ENCODE measurements at regions of chr12 and their contacts with region 1.

Region 1: DNA sequence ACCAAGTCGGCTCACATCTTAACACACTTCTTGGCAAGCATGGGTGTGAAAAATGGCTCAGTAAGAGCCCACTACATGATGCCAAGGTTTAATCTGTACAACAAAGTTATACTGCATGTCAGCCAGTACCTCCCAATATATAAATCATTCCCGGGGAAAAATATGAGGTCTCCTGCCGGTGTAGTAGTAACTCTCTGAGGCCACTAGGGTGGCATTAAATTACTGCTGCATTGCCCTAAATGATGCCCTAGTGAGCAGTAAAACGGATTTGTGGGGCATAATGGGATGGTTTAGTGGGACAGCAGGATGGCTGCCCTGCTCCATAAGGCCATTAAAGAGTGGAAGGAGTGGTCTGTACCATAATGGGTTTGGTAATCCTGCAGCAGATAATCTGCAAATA is 267.7 kb downstream of the MED13L start:
- DNase-seq: no peak
- H3K4me3 ChIP-seq: no peak overlapping the region
- H3K27ac ChIP-seq: no peak overlapping the region
- H3K4me1 ChIP-seq: no peaks in the 10 kb centered on the region
- H3K27me3 ChIP-seq: no peaks in the 10 kb centered on the region
- CTCF ChIP-seq: peak in 3 of 6 experiments; percentile 7 to 41 (median 22)
- POLR2A ChIP-seq: no peak

Region 2: DNA sequence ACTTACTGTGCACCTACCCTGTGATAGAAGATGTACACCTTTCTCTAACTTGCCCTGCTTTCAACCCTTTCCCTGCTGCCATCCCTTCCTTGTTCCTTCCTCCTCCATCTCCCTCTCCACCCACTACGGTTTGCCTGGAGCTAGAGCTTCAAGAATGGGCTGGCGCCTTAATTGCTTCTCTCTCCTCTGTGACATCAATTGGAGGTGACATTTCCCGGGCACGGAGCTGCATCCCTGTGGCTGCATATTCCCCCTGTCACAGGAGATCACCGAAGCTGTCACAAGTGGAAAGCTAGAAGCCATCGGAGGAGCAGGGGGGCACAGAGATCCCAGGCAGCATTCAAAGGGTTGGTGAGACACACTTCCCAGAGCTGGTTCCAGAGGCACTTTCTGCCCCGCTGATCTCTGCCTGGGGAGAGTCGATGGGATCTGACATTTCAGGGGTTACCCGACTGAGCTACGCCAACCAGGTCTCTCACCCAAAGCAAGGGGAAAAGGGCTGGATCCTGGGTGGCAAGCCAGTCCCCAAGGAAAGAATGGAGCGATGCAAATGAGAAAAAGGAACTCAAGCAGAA is 337.2 kb before region 1 on chr12:
- intact Hi-C with region 1: no loop called
- DNase-seq: no peak
- H3K4me3 ChIP-seq: no peak overlapping the region
- H3K27ac ChIP-seq: no peak overlapping the region
- H3K4me1 ChIP-seq: no peaks in the 10 kb centered on the region
- H3K27me3 ChIP-seq: no peaks in the 10 kb centered on the region
- CTCF ChIP-seq: no peak
- POLR2A ChIP-seq: no peak

Region 3: DNA sequence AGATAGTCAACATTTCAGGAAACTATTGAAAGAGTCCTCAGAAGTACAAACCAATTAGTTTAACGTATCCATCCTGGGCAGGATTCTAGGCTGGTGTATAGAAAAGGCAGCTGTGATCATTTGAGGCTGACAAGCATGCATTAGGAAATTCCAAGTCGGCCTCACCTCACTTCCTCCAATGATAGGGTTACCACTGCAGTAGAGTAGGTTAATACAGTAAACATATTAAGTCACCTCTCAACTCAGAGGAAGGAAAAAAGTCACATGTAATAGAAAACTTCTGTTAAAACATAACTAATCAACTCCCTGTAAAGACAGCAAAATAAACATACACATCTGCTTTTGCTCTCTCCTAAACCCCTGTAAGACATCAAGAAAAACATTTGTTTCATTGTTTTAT is 234.2 kb after region 1 on chr12:
- intact Hi-C with region 1: loop called (anchors 10 kb)
- DNase-seq: no peak
- H3K4me3 ChIP-seq: no peak overlapping the region
- H3K27ac ChIP-seq: no peak overlapping the region
- H3K4me1 ChIP-seq: peaks cover 12 to 90% (median 26%) of the 10 kb centered on the region in 3 donors
- H3K27me3 ChIP-seq: no peaks in the 10 kb centered on the region
- CTCF ChIP-seq: no peak
- POLR2A ChIP-seq: no peak

Region 4: DNA sequence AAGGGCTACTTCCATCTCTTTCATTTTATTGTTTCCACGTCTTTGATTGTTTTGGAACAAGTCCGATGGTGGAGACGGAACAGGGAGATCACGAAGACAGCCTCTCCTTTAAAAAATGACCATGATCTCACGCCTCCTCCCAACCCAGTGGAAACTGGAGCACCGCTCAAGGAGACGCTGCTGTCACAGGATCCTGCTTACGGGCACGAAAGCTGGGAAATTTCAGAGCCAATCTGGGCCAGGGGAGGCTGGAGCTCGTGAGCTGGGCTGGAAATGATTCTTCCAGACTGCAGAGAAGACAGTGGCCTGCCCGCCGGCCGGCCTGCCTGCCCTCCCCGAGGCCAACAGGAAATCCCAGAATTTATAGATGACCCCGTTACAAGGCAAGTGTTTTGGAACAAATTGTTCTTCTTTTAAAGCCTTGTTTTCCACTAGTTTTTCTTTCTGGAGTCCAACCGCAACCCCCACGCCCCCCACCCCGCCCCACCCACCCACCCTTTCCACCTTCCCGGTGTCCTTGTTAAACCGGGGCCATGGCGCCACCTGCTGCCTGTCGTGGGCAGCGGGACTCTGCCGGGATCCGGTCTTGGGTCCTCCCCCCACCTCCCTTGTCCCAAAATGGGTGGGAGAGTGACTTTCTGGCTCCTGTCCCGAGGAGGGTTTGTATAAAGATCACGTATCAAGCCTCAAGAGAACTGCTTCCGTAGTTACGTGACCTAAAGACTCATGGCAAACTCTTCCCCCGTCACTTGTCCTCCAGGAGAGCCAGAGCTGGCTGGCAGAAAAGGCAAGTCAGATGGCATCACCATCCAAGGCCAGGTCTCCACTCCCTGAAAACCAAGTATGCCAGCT is 589.7 kb after region 1 on chr12:
- intact Hi-C with region 1: no loop called
- DNase-seq: peak; percentile 10
- H3K4me3 ChIP-seq: peak overlapping the region in 3 of 4 donors; percentile 27 to 58 (median 29)
- H3K27ac ChIP-seq: peak overlapping the region; percentile 50 to 86 (median 76)
- H3K4me1 ChIP-seq: peaks cover 27 to 63% (median 34%) of the 10 kb centered on the region in 3 donors
- H3K27me3 ChIP-seq: no peaks in the 10 kb centered on the region
- CTCF ChIP-seq: peak; percentile 34 to 70 (median 56)
- POLR2A ChIP-seq: no peak

Measured in esophagus squamous epithelium (tissue), 5 donors.